ENCODE measurements at regions of chr18 and their contacts with region 1.

Region 1: GRCh38 chr18:9147440-9148202 is 11.0 kb downstream of the ANKRD12 start:
- DNase-seq: no peak
- ATAC-seq: peak; percentile 62
- H3K4me3 Mint-ChIP-seq: peak overlapping the region; percentile 39
- H3K27ac Mint-ChIP-seq: peak overlapping the region; percentile 83
- H3K4me1 Mint-ChIP-seq: peaks cover 79% of the 10 kb centered on the region
- H3K27me3 Mint-ChIP-seq: no peaks in the 10 kb centered on the region
- CTCF ChIP-seq: no peak

Region 2: DNA sequence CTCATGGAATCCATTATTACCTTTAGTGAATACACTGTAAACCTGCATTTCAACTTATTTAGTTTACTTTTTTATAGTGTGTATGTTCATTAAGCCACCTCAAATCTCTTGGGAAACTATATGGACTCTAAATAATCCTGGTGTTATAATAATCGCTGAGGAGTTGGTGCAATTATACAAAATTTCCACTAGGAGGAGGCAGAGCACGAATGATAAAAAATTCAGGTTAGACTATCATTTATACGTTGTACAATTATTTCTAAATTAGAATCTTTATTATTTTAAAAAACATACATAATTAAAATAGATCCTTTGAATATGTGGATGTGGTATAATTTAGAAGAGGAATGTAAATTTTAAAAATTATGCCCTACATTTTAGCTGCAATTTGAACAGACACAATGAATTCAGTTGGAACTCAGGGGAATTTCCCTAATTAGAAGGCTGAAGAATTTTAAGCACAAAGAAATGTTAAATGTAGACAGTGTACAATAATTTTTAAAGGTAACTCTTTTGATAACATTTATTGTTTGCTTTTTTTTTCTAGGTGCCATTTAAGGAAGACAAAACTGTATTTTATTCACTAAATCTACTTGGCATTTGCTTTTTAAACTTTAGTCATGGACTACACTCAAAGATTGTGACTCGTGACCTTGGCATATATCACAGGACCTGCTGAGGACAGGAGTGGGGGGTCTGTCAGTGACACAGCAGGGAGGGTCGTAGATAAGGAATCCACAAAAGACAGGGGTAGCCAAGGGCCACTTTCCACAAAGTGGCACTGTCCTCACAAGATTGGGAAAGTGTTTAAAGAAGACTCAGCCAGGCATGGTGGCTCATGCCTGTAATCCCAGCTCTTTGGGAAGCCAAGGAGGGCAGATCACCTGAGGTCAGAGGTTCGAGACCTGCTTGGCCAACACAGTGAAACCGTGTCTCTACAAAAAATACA is 492.8 kb before region 1 on chr18:
- CTCF ChIA-PET with region 1: interaction called, 9 read pairs
- POLR2A ChIA-PET with region 1: no interaction called
- intact Hi-C with region 1: loop called (anchors 1 kb)
- DNase-seq: no peak
- ATAC-seq: no peak
- H3K4me3 Mint-ChIP-seq: no peak overlapping the region
- H3K27ac Mint-ChIP-seq: no peak overlapping the region
- H3K4me1 Mint-ChIP-seq: peaks cover 6% of the 10 kb centered on the region
- H3K27me3 Mint-ChIP-seq: no peaks in the 10 kb centered on the region
- CTCF ChIP-seq: peak; percentile 67

Region 3: DNA sequence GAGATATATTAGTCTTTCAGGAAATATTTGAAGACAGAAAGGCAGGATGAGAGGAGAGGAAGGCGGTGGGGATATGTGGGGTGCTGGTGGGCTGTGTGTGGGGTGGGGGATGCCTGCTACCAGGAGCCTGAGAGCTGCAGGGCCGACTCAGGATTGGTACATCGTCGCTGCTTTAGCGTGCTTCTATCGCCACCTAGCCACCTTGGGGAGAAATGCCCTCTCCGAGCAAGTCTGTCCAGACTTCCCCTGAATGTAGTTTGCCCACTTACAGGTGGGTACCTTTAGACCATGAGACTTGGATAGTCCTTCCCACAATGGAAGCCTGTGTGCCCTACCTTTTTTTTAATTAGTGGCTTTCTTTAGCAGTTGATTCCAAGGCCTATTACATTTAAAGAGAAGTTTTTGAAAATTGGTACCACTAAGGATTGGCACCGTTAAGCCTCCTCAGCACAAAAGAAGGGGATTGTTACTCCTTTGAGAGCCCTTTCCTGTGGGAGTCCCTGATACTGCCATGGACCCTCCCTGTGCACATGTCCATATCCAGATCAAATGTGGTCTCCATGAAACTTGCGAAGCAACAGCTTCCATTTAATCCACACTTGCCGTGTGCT is 159.3 kb before region 1 on chr18:
- CTCF ChIA-PET with region 1: interaction called, 7 read pairs
- POLR2A ChIA-PET with region 1: no interaction called
- intact Hi-C with region 1: loop called (anchors 1 kb)
- DNase-seq: peak; percentile 25
- ATAC-seq: peak; percentile 87
- H3K4me3 Mint-ChIP-seq: no peak overlapping the region
- H3K27ac Mint-ChIP-seq: no peak overlapping the region
- H3K4me1 Mint-ChIP-seq: no peaks in the 10 kb centered on the region
- H3K27me3 Mint-ChIP-seq: peaks cover 3% of the 10 kb centered on the region
- CTCF ChIP-seq: peak; percentile 19

Region 4: GRCh38 chr18:9102508-9103375 is 44.9 kb before region 1 on chr18 and contains the start of gene NDUFV2:
- CTCF ChIA-PET with region 1: interaction called, 4 read pairs
- POLR2A ChIA-PET with region 1: interaction called, 211 read pairs
- intact Hi-C with region 1: loop called (anchors 1 kb)
- DNase-seq: peak; percentile 99
- ATAC-seq: peak; percentile 96
- H3K4me3 Mint-ChIP-seq: peak within 1 kb of the TSS; percentile 94
- H3K27ac Mint-ChIP-seq: peak within 1 kb of the TSS; percentile 94
- H3K4me1 Mint-ChIP-seq: peaks cover 51% of the 10 kb centered on the region
- H3K27me3 Mint-ChIP-seq: no peaks in the 10 kb centered on the region
- CTCF ChIP-seq: no peak
- total RNA-seq, gene NDUFV2: 168 and 169 TPM in 2 replicates

Region 5: GRCh38 chr18:9160014-9160413 is 12.4 kb after region 1 on chr18:
- CTCF ChIA-PET with region 1: no interaction called
- POLR2A ChIA-PET with region 1: interaction called, 4 read pairs
- intact Hi-C with region 1: loop called (anchors 1 kb)
- DNase-seq: no peak
- ATAC-seq: no peak
- H3K4me3 Mint-ChIP-seq: no peak overlapping the region
- H3K27ac Mint-ChIP-seq: no peak overlapping the region
- H3K4me1 Mint-ChIP-seq: peaks cover 43% of the 10 kb centered on the region
- H3K27me3 Mint-ChIP-seq: no peaks in the 10 kb centered on the region
- CTCF ChIP-seq: no peak

Region 6: DNA sequence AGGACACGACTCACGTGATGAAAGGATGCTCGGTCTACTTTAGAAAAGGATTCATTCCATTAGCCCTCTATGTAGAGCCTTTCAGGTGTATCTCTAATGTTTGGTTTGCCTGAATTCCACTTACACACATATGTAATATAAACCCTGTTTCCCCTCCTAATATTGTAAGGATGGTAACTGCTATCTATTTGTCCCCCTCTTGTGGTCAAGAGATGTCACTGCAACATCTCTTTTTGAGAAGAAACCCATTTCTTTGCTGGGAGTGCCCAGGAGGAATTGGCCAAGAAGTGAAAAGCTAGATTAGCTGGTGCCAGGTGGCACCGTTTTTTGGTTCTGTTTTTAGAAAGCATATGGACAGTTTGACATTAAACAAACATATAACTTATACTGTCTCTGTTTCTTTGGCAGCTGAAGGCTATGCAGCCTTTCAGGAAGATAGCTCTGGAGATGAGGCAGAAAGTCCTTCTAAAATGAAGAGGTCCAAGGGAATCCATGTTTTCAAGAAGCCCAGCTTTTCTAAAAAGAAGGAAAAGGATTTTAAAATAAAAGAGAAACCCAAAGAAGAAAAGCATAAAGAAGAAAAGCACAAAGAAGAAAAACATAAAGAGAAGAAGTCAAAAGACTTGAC is 368.9 kb after region 1 on chr18:
- CTCF ChIA-PET with region 1: interaction called, 5 read pairs
- POLR2A ChIA-PET with region 1: no interaction called
- intact Hi-C with region 1: loop called (anchors 5 kb)
- DNase-seq: no peak
- ATAC-seq: peak; percentile 64
- H3K4me3 Mint-ChIP-seq: no peak overlapping the region
- H3K27ac Mint-ChIP-seq: no peak overlapping the region
- H3K4me1 Mint-ChIP-seq: peaks cover 5% of the 10 kb centered on the region
- H3K27me3 Mint-ChIP-seq: no peaks in the 10 kb centered on the region
- CTCF ChIP-seq: peak; percentile 89